MCF 10A (cell line): ENCODE measurements at regions of chr18 and their contacts with region 1.

Region 1: DNA sequence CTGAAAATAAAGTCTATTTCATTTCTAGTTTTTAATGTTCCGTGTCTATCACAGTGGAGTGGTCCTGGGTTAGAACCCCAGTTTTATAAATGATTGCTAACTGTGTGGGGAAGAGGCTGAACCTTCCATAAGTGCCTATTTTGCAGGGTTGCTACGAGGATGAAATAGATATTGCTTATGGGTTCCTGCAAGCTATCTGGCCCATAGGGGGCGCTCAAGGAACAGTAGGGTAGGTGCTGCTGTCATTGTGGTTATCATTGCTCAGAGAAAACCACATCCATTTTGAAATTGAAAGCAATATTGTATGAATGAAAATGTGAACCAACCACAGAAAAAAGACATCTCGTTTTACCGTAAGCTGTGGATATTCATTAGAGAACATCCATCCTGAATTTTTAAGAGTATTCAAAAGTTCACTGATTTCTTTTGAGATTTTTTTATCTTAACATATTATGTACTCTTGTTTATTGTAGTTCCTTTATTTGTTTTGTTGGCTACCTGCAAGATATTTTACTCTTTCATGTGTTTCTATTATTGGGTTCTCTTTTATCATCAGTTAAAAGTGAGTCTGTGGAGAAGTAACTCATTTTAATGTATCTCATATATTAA is 261.6 kb downstream of the NAPG start:
- DNase-seq: peak; percentile 86
- H3K4me3 Mint-ChIP-seq: no peak overlapping the region
- H3K27ac Mint-ChIP-seq: no peak overlapping the region
- H3K4me1 Mint-ChIP-seq: no peaks in the 10 kb centered on the region
- H3K27me3 Mint-ChIP-seq: peaks cover 19% of the 10 kb centered on the region
- CTCF ChIP-seq: peak; percentile 82

Region 2: GRCh38 chr18:10776493-10776892 is 10.9 kb before region 1 on chr18:
- CTCF ChIA-PET with region 1: interaction called, 10 read pairs
- POLR2A ChIA-PET with region 1: interaction called, 5 read pairs
- intact Hi-C with region 1: no loop called
- DNase-seq: no peak
- H3K4me3 Mint-ChIP-seq: no peak overlapping the region
- H3K27ac Mint-ChIP-seq: no peak overlapping the region
- H3K4me1 Mint-ChIP-seq: no peaks in the 10 kb centered on the region
- H3K27me3 Mint-ChIP-seq: peaks cover 12% of the 10 kb centered on the region
- CTCF ChIP-seq: no peak

Region 3: GRCh38 chr18:11149441-11150270 is 362.3 kb after region 1 on chr18 and contains the start of gene PIEZO2:
- CTCF ChIA-PET with region 1: interaction called, 7 read pairs
- POLR2A ChIA-PET with region 1: no interaction called
- intact Hi-C with region 1: loop called (anchors 1 kb)
- DNase-seq: no peak
- H3K4me3 Mint-ChIP-seq: no peak within 1 kb of the TSS
- H3K27ac Mint-ChIP-seq: no peak within 1 kb of the TSS
- H3K4me1 Mint-ChIP-seq: no peaks in the 10 kb centered on the region
- H3K27me3 Mint-ChIP-seq: peaks cover 54% of the 10 kb centered on the region
- CTCF ChIP-seq: no peak
- total RNA-seq, gene PIEZO2: 0.49 and 0.93 TPM in 2 replicates